Transverse colon (tissue), 4 donors: ENCODE measurements at regions of chr11 and their contacts with region 1.

Region 1: GRCh38 chr11:84019571-84020194 is 733.5 kb upstream of the CCDC90B start:
- DNase-seq: no peak
- H3K4me3 ChIP-seq: no peak overlapping the region
- H3K27ac ChIP-seq: no peak overlapping the region
- H3K4me1 ChIP-seq: peaks cover 0 to 11% (median 2%) of the 10 kb centered on the region in 4 donors
- H3K27me3 ChIP-seq: no peaks in the 10 kb centered on the region
- CTCF ChIP-seq: no peak
- EP300 ChIP-seq: no peak
- POLR2A ChIP-seq: no peak

Region 2: GRCh38 chr11:82076126-82076525 is 1943.6 kb before region 1 on chr11:
- in situ Hi-C with region 1: no loop called
- intact Hi-C with region 1: loop called (anchors 10 kb)
- DNase-seq: no peak
- H3K4me3 ChIP-seq: no peak overlapping the region
- H3K27ac ChIP-seq: no peak overlapping the region
- H3K4me1 ChIP-seq: no peaks in the 10 kb centered on the region
- H3K27me3 ChIP-seq: no peaks in the 10 kb centered on the region
- CTCF ChIP-seq: no peak
- EP300 ChIP-seq: no peak
- POLR2A ChIP-seq: no peak

Region 3: DNA sequence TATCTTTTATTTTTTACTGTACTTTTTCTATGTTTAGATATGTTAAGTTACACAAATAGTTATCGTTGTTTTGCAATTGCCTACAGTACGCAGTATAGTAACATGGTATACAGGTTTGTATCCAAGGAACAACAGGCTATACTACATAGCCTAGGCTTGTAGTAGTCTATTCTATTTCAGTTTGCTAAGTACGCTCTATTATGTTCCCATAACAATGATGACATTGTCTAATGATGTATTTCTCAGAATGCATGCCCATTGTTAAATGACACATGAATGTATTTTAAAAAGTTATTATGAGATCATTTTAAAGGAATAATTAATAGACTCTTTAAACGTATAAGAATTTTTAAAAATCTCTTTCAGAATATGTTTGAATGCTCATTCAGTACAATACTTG is 36.9 kb before region 1 on chr11:
- in situ Hi-C with region 1: no loop called
- intact Hi-C with region 1: loop called (anchors 5 kb)
- DNase-seq: no peak
- H3K4me3 ChIP-seq: no peak overlapping the region
- H3K27ac ChIP-seq: no peak overlapping the region
- H3K4me1 ChIP-seq: no peaks in the 10 kb centered on the region
- H3K27me3 ChIP-seq: no peaks in the 10 kb centered on the region
- CTCF ChIP-seq: no peak
- EP300 ChIP-seq: no peak
- POLR2A ChIP-seq: no peak

Region 4: DNA sequence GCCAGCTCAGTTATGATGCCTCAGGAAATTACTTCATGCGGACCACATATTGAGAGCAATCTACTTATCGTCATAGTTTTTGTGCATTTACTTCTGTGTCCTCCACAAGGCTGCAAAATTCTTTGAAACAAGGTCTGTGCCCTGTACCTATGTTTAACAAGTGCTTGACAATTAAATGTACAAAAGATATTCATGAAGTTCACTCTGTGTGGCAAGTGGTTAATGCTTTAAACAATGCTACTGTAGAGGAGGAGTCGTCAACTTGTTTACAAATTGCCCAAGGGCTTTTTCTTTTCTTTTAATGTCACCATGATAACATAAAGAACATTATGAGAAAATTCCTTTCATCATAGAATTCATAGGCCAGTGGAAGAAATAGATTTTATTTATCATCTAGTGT is 138.0 kb after region 1 on chr11:
- in situ Hi-C with region 1: no loop called
- intact Hi-C with region 1: no loop called
- DNase-seq: no peak
- H3K4me3 ChIP-seq: no peak overlapping the region
- H3K27ac ChIP-seq: no peak overlapping the region
- H3K4me1 ChIP-seq: no peaks in the 10 kb centered on the region
- H3K27me3 ChIP-seq: no peaks in the 10 kb centered on the region
- CTCF ChIP-seq: no peak
- EP300 ChIP-seq: no peak
- POLR2A ChIP-seq: no peak